H1 (cell line): ENCODE measurements at regions of chr3 and their contacts with region 1.

Region 1: DNA sequence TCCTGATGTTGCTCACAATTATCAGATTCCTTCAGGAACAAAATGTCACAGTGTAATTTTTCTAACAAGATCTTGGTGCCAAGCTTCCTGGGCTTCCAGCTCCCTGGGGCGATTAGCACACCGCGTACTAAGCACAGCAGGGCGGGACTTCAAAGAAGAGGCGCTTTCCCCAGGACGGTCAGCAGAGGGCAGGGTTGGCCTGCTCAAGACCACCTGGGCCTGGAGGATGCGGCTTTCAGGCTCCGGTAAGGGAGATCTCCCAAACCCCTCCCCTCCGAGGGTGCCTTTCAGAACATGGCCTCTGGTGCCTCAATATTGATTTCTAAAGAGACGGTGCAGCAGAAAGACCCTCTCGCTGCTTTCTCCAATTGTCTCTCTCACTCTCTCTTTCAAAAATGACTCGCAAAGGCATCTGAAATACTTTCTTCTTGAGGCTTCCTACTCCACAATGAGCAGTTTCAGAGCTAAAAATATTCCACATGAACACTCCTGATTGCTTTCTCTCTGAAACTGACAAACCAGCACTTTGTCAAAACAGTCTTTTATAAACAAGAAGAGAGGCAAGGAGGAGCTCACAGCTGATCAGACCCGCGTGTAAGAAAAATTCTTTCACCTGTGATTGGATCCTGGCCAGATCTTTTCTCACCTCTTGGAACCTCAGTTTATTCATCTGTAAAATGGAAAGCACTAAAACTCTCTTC is 154.0 kb downstream of the ADAMTS9 start:
- DNase-seq: peak; percentile 86 to 90
- H3K4me3 ChIP-seq: no peak overlapping the region
- H3K27ac ChIP-seq: no peak overlapping the region
- H3K4me1 ChIP-seq: peaks cover 0 to 3% (median 0%) of the 10 kb centered on the region in 4 experiments; a peak in 1 of 7 replicates
- H3K27me3 ChIP-seq: peaks cover 9 to 23% (median 21%) of the 10 kb centered on the region in 4 experiments
- CTCF ChIP-seq: peak; percentile 88 to 98 (median 91)
- EP300 ChIP-seq: no peak
- POLR2A ChIP-seq: no peak
- RAD21 ChIP-seq: peak; percentile 100

Region 2: GRCh38 chr3:64440498-64440897 is 93.3 kb before region 1 on chr3:
- CTCF ChIA-PET with region 1: no interaction called
- POLR2A ChIA-PET with region 1: no interaction called
- DNase-seq: no peak
- H3K4me3 ChIP-seq: no peak overlapping the region
- H3K27ac ChIP-seq: no peak overlapping the region
- H3K4me1 ChIP-seq: peaks cover 4 to 24% (median 17%) of the 10 kb centered on the region in 4 experiments
- H3K27me3 ChIP-seq: no peaks in the 10 kb centered on the region; a peak in 2 of 7 replicates
- CTCF ChIP-seq: no peak
- EP300 ChIP-seq: no peak
- POLR2A ChIP-seq: no peak
- RAD21 ChIP-seq: no peak

Region 3: DNA sequence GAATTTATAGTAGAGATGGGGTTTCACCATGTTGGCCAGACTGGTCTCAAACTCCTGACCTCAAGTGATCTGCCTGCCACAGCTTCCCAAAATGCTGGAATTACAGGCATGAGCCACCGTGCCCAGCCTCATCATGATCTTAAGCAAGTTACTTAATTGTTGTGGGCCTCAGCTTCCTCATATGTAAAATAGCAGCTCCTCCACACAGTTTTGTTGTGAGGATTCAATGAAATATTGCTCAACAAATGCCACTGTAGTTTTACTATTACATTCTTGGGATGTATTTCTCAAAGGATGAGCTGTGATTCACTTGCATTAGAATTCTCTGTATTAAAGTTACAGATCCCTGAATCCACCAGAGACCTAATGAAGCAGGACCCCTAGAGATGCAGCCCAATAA is 14.8 kb before region 1 on chr3:
- CTCF ChIA-PET with region 1: interaction called, 12 read pairs
- POLR2A ChIA-PET with region 1: no interaction called
- DNase-seq: no peak
- H3K4me3 ChIP-seq: no peak overlapping the region
- H3K27ac ChIP-seq: no peak overlapping the region
- H3K4me1 ChIP-seq: no peaks in the 10 kb centered on the region
- H3K27me3 ChIP-seq: no peaks in the 10 kb centered on the region
- CTCF ChIP-seq: no peak
- EP300 ChIP-seq: no peak
- POLR2A ChIP-seq: no peak
- RAD21 ChIP-seq: no peak

Region 4: GRCh38 chr3:64554081-64554920 is 20.5 kb after region 1 on chr3:
- CTCF ChIA-PET with region 1: interaction called, 19 read pairs
- POLR2A ChIA-PET with region 1: no interaction called
- DNase-seq: no peak
- H3K4me3 ChIP-seq: no peak overlapping the region
- H3K27ac ChIP-seq: no peak overlapping the region
- H3K4me1 ChIP-seq: no peaks in the 10 kb centered on the region
- H3K27me3 ChIP-seq: no peaks in the 10 kb centered on the region
- CTCF ChIP-seq: no peak
- EP300 ChIP-seq: no peak
- POLR2A ChIP-seq: no peak
- RAD21 ChIP-seq: no peak

Region 5: GRCh38 chr3:64681827-64682226 is 148.1 kb after region 1 on chr3:
- CTCF ChIA-PET with region 1: interaction called, 13 read pairs
- POLR2A ChIA-PET with region 1: no interaction called
- DNase-seq: no peak
- H3K4me3 ChIP-seq: peak overlapping the region in 1 of 4 experiments; percentile 18; a peak in 1 of 8 replicates
- H3K27ac ChIP-seq: no peak overlapping the region
- H3K4me1 ChIP-seq: peaks cover 15 to 42% (median 32%) of the 10 kb centered on the region in 4 experiments
- H3K27me3 ChIP-seq: peaks cover 39 to 72% (median 62%) of the 10 kb centered on the region in 4 experiments
- CTCF ChIP-seq: no peak
- EP300 ChIP-seq: no peak; a peak in 1 of 3 replicates
- POLR2A ChIP-seq: no peak
- RAD21 ChIP-seq: no peak

Region 6: DNA sequence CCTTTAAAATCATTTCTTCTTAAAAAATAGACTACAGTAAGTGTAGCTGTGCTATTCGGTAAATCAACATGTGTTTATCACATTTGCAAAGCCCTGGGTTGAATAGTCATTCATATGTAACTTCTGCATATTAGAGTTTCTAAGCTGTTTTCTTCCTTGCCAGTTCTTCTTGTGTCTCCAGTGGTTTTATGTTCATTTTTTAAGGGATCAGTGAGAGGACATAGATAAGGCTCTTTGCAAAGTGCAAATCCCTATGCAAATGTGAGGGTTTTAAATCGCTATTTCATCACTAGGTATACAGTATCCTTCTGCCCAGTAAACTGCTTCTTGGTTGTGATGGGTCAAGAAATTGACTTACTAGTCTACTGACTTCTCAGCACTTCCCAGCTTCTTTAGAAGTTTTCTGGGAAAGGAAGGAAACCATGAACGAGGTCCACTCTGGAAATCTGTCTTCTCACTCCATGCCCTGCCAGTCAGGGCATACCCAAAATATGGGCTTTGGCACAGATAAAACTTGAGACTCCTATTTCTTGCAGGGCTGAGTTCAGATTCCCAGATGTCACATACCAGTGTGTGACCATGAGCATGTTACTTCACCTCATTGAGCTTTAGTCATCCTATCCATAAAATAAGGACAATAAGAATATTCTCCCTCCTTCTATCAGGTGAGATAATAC is 192.8 kb after region 1 on chr3:
- CTCF ChIA-PET with region 1: interaction called, 10 read pairs
- POLR2A ChIA-PET with region 1: no interaction called
- DNase-seq: no peak
- H3K4me3 ChIP-seq: no peak overlapping the region
- H3K27ac ChIP-seq: no peak overlapping the region
- H3K4me1 ChIP-seq: peaks cover 0 to 6% (median 0%) of the 10 kb centered on the region in 4 experiments; a peak in 2 of 7 replicates
- H3K27me3 ChIP-seq: no peaks in the 10 kb centered on the region
- CTCF ChIP-seq: no peak
- EP300 ChIP-seq: no peak
- POLR2A ChIP-seq: no peak
- RAD21 ChIP-seq: no peak

Region 7: DNA sequence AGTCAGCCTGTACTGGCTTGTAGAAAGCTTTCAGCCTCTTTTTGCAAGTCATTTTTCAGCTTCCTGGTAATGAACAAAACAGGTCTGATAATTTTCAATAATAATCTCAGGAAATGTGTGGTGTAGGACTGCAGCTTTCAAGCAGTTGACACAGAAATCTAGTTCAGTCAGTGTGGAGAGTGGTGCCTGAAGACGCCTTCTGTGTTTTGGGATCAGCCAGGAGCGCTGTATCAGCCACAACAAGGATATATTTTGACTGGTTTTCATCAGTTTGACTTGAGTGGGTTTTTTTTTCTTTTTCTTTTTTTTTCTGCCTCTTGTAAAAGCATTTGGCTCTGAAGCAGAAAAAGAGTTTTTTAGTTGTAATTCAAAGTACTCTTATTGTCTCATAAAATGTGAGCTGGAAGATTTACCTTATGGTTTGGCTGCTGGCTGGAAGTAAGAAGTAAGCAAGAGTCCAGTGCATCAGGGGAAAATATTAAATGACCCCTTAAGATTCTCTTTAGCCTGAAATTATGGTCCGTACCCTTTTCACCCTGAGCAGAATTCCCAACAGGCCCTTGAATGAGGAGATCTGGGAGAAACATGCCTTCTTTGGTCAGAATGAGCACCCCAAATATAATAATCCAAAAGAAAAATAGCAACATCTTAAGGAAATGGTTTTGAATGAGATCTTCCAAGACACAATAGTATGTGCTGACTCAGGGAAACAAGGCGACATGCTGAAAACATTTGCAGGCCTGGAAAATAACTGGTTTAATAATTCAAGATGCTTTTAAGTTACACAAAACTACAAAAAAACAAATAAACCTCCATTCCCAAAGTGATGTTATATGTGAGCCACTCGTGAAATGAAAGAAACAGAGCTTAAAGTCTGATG is 486.8 kb after region 1 on chr3:
- CTCF ChIA-PET with region 1: interaction called, 64 read pairs
- POLR2A ChIA-PET with region 1: no interaction called
- DNase-seq: no peak
- H3K4me3 ChIP-seq: no peak overlapping the region
- H3K27ac ChIP-seq: no peak overlapping the region
- H3K4me1 ChIP-seq: no peaks in the 10 kb centered on the region; a peak in 1 of 7 replicates
- H3K27me3 ChIP-seq: no peaks in the 10 kb centered on the region
- CTCF ChIP-seq: no peak
- EP300 ChIP-seq: no peak
- POLR2A ChIP-seq: no peak
- RAD21 ChIP-seq: no peak